Activated CD4-positive, alpha-beta T cell treated with anti-CD3 and anti-CD28 coated beads for 36 hours (primary cell): ENCODE measurements at regions of chr20 and their contacts with region 1.

Region 1: DNA sequence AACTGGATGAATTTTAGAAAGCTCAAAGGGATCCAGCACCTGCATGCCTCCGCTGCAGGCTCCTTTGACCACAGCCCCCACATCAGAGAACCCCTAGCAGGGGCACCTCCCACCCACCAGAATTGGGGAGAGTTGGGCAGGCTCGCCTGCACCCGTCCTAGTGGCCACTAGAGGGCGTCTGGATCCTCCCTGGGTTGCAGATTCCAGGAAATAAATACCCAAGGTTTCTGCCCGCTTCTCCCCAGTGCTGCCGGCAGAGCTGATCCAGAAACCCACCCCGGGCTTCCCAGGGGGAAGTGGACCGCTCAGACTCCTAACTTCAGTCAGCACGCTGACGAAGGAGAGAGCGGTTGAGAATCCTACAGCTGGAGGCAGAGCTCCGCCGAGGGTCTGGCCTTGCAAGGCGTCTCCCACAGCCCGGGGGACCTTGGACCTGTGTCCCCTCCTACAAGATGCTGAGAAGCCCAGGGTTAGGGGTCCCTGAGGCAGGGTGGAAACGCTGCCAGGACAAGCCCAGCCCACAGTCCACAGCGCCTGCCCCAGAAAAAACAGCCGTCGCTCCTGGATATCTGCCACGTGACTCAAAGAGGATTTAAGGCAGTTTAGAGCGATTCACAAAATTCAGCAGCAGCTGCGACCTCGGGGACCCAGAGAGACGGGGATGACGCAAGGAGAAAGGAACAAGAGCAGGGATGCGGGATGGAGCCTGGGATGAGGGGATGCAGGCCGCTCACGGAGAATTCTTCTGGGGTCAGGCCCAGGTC is 32.6 kb upstream of the PHACTR3 start:
- DNase-seq: peak; percentile 77
- ATAC-seq: peak; percentile 85
- H3K4me3 Mint-ChIP-seq: peak overlapping the region; percentile 44
- H3K27ac Mint-ChIP-seq: no peak overlapping the region
- H3K4me1 Mint-ChIP-seq: peaks cover 11% of the 10 kb centered on the region
- H3K27me3 Mint-ChIP-seq: peaks cover 33% of the 10 kb centered on the region

Region 2: GRCh38 chr20:59351414-59352040 is 220.2 kb before region 1 on chr20:
- CTCF ChIA-PET with region 1: no interaction called
- POLR2A ChIA-PET with region 1: no interaction called
- intact Hi-C with region 1: no loop called
- DNase-seq: no peak
- ATAC-seq: no peak
- H3K4me3 Mint-ChIP-seq: no peak overlapping the region
- H3K27ac Mint-ChIP-seq: no peak overlapping the region
- H3K4me1 Mint-ChIP-seq: peaks cover 2% of the 10 kb centered on the region
- H3K27me3 Mint-ChIP-seq: no peaks in the 10 kb centered on the region

Region 3: DNA sequence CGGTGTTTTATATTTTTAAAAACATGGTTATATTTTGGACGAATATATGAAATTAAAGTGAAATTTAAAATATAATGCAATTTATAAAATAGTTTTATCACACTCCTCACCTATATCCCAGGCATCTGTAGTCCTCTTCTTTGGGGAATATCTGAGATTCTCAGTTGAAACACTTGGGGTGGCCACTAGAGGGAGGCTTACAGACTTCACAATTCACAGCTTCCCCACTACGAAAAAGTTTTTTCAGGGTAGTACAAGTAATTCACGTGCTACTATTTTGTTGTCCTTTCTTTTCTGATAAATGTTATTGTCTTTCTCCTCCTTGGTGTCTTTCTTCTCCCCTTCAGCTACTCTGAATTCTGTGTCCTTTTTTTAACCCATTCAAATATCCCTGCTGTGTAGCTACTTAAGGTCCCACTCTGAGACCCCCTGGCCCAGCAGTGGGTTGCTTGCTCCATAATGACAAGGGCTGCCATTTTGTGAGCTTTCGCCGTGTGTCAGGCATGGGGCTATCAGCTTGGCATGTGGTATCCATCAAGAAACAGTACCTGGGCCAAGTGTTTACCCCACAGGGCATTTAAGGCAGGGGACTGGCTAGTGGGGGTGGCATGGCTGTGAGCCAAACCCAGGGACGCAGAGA is 11.0 kb before region 1 on chr20:
- CTCF ChIA-PET with region 1: interaction called, 23 read pairs
- POLR2A ChIA-PET with region 1: no interaction called
- intact Hi-C with region 1: no loop called
- DNase-seq: no peak
- ATAC-seq: no peak
- H3K4me3 Mint-ChIP-seq: no peak overlapping the region
- H3K27ac Mint-ChIP-seq: no peak overlapping the region
- H3K4me1 Mint-ChIP-seq: no peaks in the 10 kb centered on the region
- H3K27me3 Mint-ChIP-seq: peaks cover 4% of the 10 kb centered on the region

Region 4: DNA sequence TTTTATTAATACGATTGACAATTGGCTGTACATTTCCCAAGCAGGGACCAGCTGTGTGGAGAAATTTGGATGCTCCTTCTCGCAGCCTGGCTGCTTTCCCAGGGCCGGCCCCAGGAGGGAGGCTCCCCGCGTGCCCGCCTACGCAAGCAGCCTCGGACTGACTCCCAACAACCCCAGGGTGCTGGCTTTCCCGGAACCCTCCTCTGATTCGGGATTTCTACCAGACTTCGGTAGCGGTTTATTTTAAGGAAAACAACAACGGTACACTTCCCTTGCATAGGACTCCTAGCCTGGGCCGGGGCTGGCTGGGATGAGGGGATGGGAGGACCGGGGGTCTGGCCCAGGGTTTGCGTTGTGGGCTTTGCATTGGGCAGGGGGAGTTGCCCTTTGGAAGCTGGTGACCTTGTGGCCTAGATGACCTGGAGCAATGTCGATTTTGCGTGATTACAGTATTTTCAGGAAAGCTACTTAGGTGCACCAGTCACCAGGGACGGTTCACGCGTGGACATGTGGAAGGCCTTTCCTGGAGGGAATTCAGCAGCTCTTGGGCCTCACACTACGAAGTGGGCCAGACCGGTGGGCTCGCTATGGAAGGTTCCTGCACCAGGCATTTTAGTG is 11.8 kb after region 1 on chr20:
- CTCF ChIA-PET with region 1: interaction called, 24 read pairs
- POLR2A ChIA-PET with region 1: no interaction called
- intact Hi-C with region 1: no loop called
- DNase-seq: no peak
- ATAC-seq: no peak
- H3K4me3 Mint-ChIP-seq: no peak overlapping the region
- H3K27ac Mint-ChIP-seq: no peak overlapping the region
- H3K4me1 Mint-ChIP-seq: peaks cover 5% of the 10 kb centered on the region
- H3K27me3 Mint-ChIP-seq: peaks cover 12% of the 10 kb centered on the region

Region 5: DNA sequence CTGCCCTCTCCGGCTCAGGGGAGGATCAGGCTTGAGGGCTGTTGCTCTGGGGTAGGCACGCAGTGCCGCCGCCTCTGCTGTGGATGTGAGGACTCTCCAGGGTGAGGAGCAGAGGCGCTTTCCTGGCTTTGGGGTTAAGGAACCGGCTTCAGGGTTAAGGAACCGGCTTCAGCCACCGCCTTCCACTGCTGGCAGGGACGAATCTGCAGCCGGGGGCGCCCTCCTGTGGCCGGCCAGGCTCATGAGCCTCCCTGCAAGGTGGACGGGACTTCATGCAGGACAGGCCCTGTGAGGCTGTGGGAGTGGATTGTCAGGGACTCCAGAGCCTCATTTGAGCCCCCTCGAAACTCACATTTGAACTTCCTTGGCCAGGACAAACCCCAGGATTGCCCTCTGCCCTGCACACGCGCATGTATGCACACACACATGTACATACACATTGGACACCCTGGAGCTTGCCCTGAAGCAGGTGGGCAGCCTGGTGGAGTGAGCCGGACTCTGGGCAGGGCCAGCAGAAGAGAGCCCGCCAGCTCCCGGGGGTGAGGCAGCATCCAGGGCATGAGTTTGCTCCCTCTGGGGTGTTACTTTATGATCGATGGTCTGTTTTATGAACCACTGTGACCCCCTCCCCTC is 179.4 kb after region 1 on chr20:
- CTCF ChIA-PET with region 1: interaction called, 5 read pairs
- POLR2A ChIA-PET with region 1: no interaction called
- intact Hi-C with region 1: loop called in 1 of 2 experiments (anchors 1 kb)
- DNase-seq: peak; percentile 74
- ATAC-seq: peak; percentile 64
- H3K4me3 Mint-ChIP-seq: no peak overlapping the region
- H3K27ac Mint-ChIP-seq: no peak overlapping the region
- H3K4me1 Mint-ChIP-seq: no peaks in the 10 kb centered on the region
- H3K27me3 Mint-ChIP-seq: peaks cover 12% of the 10 kb centered on the region